CD4-positive, alpha-beta memory T cell (primary cell): ENCODE measurements at regions of chr1 and their contacts with region 1.

Region 1: DNA sequence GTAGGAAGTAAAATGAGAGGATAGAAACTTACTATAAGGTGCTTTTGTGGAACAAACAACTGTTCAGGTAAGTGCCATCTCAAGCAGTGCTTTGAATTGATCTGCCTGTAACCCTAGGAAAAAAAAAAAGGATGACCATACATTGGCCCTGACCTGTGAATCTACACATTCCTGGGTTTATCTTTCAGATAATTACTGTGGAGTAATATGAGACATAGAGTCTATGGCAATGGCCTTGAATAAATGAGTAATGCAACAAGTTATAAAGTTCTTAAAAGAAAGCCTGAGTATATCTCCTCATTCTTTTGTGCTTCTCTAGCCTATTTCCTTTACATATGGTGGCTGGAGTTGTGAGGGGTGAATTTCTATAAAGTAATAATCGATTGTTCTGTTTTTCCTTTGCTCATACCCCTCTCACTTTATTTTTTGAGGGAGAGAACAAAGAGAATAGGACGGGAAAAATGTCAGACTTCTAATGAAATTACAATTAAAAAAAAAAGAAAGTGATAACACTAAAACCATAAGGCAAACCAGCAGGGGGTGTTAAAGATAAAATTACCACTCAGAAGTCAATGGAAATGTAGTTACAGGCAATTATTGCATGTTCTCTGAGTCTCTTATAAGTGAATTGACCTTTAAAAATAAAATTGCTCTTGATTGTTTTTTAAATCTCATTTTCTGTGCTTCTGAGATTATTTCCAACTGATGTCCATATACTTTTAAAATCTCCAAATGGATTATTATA is 12.4 kb upstream of the ATP1A1 start:
- DNase-seq: peak in 4 of 5 donors; percentile 40 to 47 (median 43)
- H3K4me3 ChIP-seq: no peak overlapping the region
- H3K4me3 Mint-ChIP-seq: no peak overlapping the region
- H3K27ac ChIP-seq: no peak overlapping the region
- H3K27ac Mint-ChIP-seq: peak overlapping the region in 1 of 7 donors; percentile 22
- H3K4me1 ChIP-seq: peaks cover 6% of the 10 kb centered on the region
- H3K4me1 Mint-ChIP-seq: peaks cover 13 to 30% (median 20%) of the 10 kb centered on the region in 4 donors
- H3K27me3 ChIP-seq: no peaks in the 10 kb centered on the region
- H3K27me3 Mint-ChIP-seq: no peaks in the 10 kb centered on the region

Region 2: DNA sequence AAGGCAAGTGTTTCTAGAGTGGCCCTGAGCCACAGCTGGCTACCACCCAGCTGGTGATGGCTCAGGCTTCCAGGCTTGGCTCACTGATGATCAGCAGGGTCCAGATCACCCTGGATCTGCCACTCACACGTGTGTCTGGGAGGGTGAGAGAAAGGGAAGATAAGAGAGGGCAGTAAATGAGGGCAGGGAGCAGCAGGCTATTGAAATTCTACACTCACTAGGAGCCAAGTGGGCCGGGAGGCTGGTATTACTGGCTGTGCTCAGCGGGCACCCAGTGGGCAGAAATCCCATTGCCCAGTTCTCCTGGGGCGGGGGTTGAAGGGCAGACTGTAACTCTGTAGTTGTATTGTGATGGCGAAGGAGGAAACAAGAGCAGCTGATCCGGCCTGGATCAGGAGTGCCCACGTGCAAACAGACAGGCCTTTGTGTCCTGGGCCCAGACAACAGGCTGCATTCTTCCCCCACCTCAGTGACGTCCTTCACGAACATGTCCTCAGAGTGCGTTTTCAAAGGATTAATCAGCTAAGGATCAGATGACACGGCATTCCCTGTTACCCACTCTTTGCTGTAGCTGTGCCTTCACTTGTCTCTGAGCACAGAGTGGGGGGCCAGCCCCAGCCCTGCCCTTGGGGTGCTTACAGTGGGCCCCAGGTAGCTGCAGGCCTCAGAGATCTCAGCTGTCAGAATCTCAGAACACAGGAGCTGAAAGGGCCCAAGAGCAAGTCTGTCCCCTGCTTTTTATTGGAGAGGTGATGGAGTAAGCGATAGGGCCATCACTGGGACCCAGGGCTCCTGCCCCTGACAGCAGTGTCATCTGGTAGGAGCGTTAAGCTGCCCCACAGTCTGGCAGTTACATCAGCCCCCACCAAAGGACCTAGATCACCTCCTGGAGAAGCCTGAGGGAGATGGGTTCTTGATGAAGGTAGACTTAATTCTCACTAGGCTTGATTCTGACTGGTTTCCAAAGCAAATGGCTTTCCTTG is 73.0 kb after region 1 on chr1:
- CTCF ChIA-PET with region 1: no interaction called
- POLR2A ChIA-PET with region 1: no interaction called
- intact Hi-C with region 1: loop called (anchors 5 kb)
- DNase-seq: no peak
- H3K4me3 ChIP-seq: no peak overlapping the region
- H3K4me3 Mint-ChIP-seq: no peak overlapping the region
- H3K27ac ChIP-seq: no peak overlapping the region
- H3K27ac Mint-ChIP-seq: no peak overlapping the region
- H3K4me1 ChIP-seq: no peaks in the 10 kb centered on the region
- H3K4me1 Mint-ChIP-seq: no peaks in the 10 kb centered on the region
- H3K27me3 ChIP-seq: no peaks in the 10 kb centered on the region
- H3K27me3 Mint-ChIP-seq: no peaks in the 10 kb centered on the region

Region 3: GRCh38 chr1:116847688-116848531 is 487.3 kb after region 1 on chr1:
- CTCF ChIA-PET with region 1: no interaction called
- POLR2A ChIA-PET with region 1: no interaction called
- intact Hi-C with region 1: no loop called
- DNase-seq: peak in 1 of 5 donors; percentile 14
- H3K4me3 ChIP-seq: no peak overlapping the region
- H3K4me3 Mint-ChIP-seq: peak overlapping the region in 1 of 8 donors; percentile 2
- H3K27ac ChIP-seq: no peak overlapping the region
- H3K27ac Mint-ChIP-seq: no peak overlapping the region
- H3K4me1 ChIP-seq: no peaks in the 10 kb centered on the region
- H3K4me1 Mint-ChIP-seq: peaks cover 0 to 4% (median under 1%) of the 10 kb centered on the region in 4 donors
- H3K27me3 ChIP-seq: no peaks in the 10 kb centered on the region
- H3K27me3 Mint-ChIP-seq: no peaks in the 10 kb centered on the region